Dorsolateral prefrontal cortex (tissue), 120 donors: ENCODE measurements at regions of chr2 and their contacts with region 1.

Region 1: DNA sequence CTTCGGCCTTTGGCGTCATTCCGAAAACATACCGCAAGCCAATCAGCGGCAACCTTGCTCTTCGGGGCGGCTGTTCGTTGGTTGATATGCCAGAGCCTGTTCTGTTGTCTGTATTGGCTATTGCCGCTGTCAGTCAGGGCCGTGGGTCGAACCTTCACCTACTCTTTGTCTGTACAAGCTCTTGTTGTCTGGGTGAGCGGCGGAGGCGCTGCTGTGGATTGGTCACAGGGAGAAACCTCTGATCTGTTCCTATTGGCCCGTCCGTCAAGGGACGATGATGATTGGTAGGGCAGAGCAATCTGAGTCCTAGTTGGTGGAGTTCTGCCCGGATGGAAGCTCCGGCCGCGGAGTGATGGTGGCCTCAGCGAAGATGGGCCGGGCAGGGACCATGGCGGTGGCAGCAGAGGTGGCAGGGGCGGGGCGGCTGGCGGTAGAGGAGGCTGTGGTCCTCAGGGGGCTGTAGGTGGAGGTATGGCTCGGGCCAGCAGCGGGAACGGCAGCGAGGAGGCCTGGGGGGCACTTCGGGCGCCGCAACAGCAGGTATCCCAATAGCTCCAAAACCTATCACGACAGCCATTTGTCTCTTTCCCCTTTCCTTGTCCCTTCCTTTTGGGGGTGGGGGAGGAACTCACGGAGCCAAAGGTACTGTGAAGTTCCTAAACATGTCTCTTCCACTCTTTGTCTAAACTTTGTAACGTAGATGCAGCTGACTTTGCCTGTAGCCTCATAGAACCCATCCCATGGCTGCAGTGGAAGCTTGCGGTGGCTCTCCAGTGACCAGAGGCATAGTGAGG is at the start of gene WBP1:
- DNase-seq: peak; percentile 98 to 100 (median 100)
- H3K4me3 ChIP-seq: peak within 1 kb of the TSS; percentile 58 to 96 (median 79)
- H3K27ac ChIP-seq: peak within 1 kb of the TSS; percentile 75 to 99 (median 95)
- H3K27me3 ChIP-seq: no peaks in the 10 kb centered on the region
- CTCF ChIP-seq: peak in 9 of 56 donors; percentile 8 to 32 (median 25)
- total RNA-seq, gene WBP1: 55.2 to 111 (median 78.3) TPM

Region 2: DNA sequence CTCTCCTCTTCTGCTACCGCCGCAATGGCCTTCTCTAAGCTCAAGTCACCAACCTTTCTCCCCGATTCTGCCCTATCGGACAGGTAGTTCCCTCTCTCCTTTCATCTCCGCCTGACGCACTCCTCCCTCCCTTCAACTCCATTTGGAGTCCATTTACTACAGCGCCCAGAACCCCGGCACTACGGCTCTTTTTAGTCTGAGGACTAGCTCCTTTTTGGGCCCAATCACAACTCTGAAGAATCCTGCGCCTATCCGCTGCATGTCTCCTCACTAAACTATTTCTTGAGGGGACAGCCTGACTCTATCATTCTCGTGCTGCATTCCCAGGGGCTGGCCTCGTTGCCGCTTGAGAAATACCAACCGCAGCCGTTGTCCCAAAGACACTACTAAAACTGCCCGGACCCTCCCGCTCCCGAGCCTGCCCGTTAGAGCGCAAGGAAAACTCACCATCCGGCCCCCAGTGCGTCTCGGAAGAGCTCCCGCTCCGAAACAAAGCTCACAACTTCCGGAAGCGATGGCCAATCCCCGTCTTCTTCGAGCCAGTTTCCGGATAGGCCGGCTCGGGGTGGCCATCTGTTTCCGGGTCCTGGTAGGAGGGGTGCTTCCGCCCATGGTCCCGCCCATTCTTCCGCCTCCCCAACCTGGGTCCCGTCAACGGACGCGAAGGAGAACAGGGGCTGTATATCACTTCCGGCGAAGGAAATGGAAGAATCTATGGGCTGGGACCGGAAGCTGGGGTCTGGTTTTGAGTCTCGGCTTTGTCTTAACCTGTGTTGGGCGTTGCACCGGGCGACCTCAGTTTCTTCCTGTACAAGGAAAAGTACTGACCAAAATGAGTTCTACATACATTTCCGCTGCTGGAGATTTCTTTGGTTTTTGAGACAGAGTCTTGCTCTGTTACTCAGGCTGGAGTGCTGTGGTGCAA is 721.2 kb before region 1 on chr2 and contains the start of gene TPRKB:
- intact Hi-C with region 1: loop called in 1 of 2 experiments (anchors 10 kb)
- DNase-seq: peak; percentile 88 to 97 (median 95)
- H3K4me3 ChIP-seq: peak within 1 kb of the TSS; percentile 52 to 95 (median 82)
- H3K27ac ChIP-seq: peak within 1 kb of the TSS in 53 of 59 donors; percentile 5 to 86 (median 70)
- H3K27me3 ChIP-seq: no peaks in the 10 kb centered on the region
- CTCF ChIP-seq: peak in 27 of 56 donors; percentile 5 to 51 (median 24)
- total RNA-seq, gene TPRKB: 12.6 to 29.0 (median 19.5) TPM

Region 3: DNA sequence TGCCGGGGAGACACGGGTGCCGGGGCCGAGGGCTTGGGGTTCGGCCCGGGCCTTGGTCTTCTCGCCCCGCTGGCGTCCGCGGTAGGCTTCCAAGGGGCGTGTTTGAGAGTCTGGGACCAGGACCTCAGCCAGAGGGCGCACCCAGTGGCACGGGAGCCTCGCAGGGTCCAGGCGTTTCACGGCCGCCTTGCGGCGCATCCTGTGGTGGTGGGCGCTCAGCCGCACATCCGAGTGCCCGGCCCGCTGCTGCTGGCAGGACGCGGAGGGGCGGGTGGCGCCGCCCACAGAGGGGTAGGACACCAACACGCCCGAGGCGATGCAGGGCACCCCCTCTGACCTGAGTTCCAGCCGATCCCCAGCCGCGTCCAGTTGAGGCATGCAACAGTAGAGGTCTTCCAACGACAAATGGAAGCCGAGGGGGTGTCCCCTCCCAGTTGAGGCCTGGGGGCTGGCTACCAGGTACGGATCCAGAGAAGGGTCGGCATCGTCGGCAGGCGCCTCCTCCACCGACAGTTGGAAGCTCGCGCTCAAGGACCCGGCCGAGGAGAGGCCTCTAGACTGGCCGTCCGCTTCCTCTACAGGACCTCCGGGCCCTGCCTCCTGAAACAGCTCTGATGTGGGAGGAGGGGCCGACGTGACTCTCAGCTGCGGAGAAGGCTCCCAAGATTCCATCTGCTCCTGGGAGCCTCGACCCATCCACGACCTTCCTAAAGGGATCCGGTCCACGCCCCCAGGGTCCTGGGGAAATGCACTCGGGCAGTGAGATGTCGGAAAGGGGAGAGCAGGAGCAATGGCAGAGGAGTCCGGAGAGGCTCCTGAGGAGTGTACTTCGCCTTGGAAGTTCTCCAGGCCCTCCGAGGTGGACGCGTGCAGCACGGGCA is 43.2 kb before region 1 on chr2:
- intact Hi-C with region 1: loop called in 1 of 2 experiments (anchors 5 kb)
- DNase-seq: peak in 4 of 10 donors; percentile 35 to 68 (median 60)
- H3K4me3 ChIP-seq: peak overlapping the region; percentile 37 to 77 (median 61)
- H3K27ac ChIP-seq: peak overlapping the region in 22 of 59 donors; percentile 2 to 74 (median 30)
- H3K27me3 ChIP-seq: no peaks in the 10 kb centered on the region
- CTCF ChIP-seq: peak in 55 of 56 donors; percentile 13 to 74 (median 54)

Region 4: GRCh38 chr2:74440378-74441169 is 17.8 kb before region 1 on chr2:
- intact Hi-C with region 1: loop called (anchors 1 kb)
- DNase-seq: peak; percentile 50 to 95 (median 88)
- H3K4me3 ChIP-seq: peak overlapping the region; percentile 35 to 91 (median 64)
- H3K27ac ChIP-seq: peak overlapping the region; percentile 29 to 99 (median 95)
- H3K27me3 ChIP-seq: peaks cover 0 to 36% (median 12%) of the 10 kb centered on the region in 45 donors
- CTCF ChIP-seq: peak in 33 of 56 donors; percentile 8 to 50 (median 26)

Region 5: GRCh38 chr2:74482801-74483674 is 24.7 kb after region 1 on chr2 and contains the starts of genes CCDC142 and TTC31:
- intact Hi-C with region 1: loop called (anchors 1 kb)
- DNase-seq: peak; percentile 91 to 97 (median 94)
- H3K4me3 ChIP-seq: peak within 1 kb of the TSS; percentile 68 to 100 (median 90)
- H3K27ac ChIP-seq: peak within 1 kb of the TSS; percentile 65 to 98 (median 92)
- H3K27me3 ChIP-seq: no peaks in the 10 kb centered on the region
- CTCF ChIP-seq: peak; percentile 68 to 96 (median 86)
- total RNA-seq, gene CCDC142: 8.0 to 35.4 (median 19.6) TPM
- total RNA-seq, gene TTC31: 7.8 to 28.4 (median 15.7) TPM

Region 6: GRCh38 chr2:74493546-74493945 is 35.2 kb after region 1 on chr2:
- intact Hi-C with region 1: no loop called
- DNase-seq: no peak
- H3K4me3 ChIP-seq: no peak overlapping the region
- H3K27ac ChIP-seq: no peak overlapping the region
- H3K27me3 ChIP-seq: peaks cover 0 to 22% (median 14%) of the 10 kb centered on the region in 45 donors
- CTCF ChIP-seq: no peak